Gastrocnemius medialis (tissue), 4 donors: ENCODE measurements at regions of chr17 and their contacts with region 1.

Region 1: DNA sequence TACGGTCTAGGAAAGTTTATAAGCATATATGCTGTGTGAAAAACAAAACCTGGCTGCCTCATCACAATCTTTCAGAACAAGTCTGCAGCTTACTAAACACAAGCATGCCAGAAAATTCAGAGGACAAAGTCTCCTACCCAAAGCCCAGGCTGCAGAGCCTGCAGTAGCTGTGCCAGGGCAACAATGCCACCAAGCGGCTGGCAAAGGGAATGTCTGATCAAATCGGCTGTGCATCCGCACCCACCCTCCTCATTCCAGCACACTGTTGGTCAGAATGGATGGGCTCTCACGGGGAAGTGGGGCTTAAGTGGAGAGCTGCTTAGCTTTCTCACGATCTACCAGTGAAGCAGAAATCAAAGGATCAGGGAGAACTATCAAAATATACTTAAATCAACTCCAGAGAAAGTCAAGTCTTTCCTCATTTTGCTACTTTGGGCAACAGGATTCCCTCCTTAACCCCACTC is 73.5 kb downstream of the CYTH1 start:
- DNase-seq: peak; percentile 52 to 68
- ATAC-seq: peak; percentile 86 to 93
- H3K4me3 ChIP-seq: no peak overlapping the region
- H3K27ac ChIP-seq: peak overlapping the region in 2 of 4 donors; percentile 3 to 6
- H3K4me1 ChIP-seq: peaks cover 13 to 28% of the 10 kb centered on the region in 2 donors
- H3K27me3 ChIP-seq: no peaks in the 10 kb centered on the region
- CTCF ChIP-seq: peak; percentile 73 to 89 (median 83)
- POLR2A ChIP-seq: no peak

Region 2: DNA sequence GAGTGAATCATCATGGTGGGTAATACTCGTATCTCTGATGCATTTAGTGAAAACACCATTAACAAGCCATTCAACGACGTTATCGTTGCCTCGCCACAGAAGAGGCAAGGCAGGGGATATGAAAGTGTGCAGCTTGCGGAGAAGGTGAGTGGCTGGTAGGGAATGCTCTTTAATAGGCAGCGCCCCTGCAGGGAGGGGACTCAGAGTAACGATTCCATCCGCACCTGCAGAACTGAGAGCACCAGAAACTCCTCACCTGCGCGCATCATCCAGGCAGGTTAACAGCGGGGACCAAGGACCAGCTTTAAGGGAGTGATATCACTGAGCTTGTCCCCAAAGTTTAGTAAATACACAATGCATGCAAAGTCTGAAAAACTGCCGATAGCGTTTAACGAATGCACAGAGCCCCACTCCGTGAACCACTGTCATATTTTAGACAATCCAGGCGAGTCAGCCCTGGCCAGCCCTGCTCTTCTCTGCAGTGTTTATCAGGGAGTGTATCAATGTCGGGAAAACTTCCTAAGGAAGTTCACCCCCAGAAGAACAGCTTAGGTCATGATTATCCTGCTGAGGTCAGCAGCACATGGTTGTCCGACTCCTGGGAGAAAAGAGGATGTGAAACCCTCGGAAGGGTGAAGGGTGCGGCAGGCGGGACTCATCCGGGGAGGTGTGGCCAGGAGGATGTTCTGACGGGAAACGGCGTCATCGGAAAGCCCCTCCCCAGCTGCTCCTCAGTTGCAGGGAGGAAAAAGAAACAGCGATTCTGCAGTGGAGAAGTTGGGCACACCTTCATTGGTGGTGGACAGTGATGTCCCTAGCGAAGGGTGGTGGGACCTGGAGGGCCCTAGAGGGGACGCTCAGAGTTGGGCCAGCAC is 62.9 kb before region 1 on chr17:
- in situ Hi-C with region 1: loop called in 1 of 4 experiments (anchors 10 kb)
- intact Hi-C with region 1: no loop called
- DNase-seq: peak; percentile 51 to 59
- ATAC-seq: peak; percentile 66 to 70
- H3K4me3 ChIP-seq: no peak overlapping the region
- H3K27ac ChIP-seq: peak overlapping the region in 2 of 4 donors; percentile 43 to 48
- H3K4me1 ChIP-seq: no peaks in the 10 kb centered on the region
- H3K27me3 ChIP-seq: no peaks in the 10 kb centered on the region
- CTCF ChIP-seq: no peak
- POLR2A ChIP-seq: peak in 1 of 2 donors; percentile 44

Region 3: GRCh38 chr17:78689029-78689428 is 19.5 kb before region 1 on chr17:
- in situ Hi-C with region 1: no loop called
- intact Hi-C with region 1: no loop called
- DNase-seq: no peak
- ATAC-seq: no peak
- H3K4me3 ChIP-seq: no peak overlapping the region
- H3K27ac ChIP-seq: no peak overlapping the region
- H3K4me1 ChIP-seq: no peaks in the 10 kb centered on the region
- H3K27me3 ChIP-seq: no peaks in the 10 kb centered on the region
- CTCF ChIP-seq: no peak
- POLR2A ChIP-seq: no peak